K562 (cell line): ENCODE measurements at regions of chr3 and their contacts with region 1.

Region 1: GRCh38 chr3:38131621-38132369 is 5.1 kb downstream of the ACAA1 start:
- DNase-seq: peak; percentile 69 to 82 (median 70)
- ATAC-seq: peak; percentile 87
- H3K4me3 ChIP-seq: no peak overlapping the region
- H3K27ac ChIP-seq: no peak overlapping the region
- H3K4me1 ChIP-seq: peaks cover 4 to 6% of the 10 kb centered on the region in 2 experiments; a peak in 2 of 5 replicates
- H3K27me3 ChIP-seq: no peaks in the 10 kb centered on the region
- CTCF ChIP-seq: peak; percentile 88 to 96 (median 92)
- EP300 ChIP-seq: 0 out of 2 replicates have a peak, but pooled peaks have one; percentile 8
- POLR2A ChIP-seq: no peak
- RAD21 ChIP-seq: peak; percentile 73 to 86

Region 2: DNA sequence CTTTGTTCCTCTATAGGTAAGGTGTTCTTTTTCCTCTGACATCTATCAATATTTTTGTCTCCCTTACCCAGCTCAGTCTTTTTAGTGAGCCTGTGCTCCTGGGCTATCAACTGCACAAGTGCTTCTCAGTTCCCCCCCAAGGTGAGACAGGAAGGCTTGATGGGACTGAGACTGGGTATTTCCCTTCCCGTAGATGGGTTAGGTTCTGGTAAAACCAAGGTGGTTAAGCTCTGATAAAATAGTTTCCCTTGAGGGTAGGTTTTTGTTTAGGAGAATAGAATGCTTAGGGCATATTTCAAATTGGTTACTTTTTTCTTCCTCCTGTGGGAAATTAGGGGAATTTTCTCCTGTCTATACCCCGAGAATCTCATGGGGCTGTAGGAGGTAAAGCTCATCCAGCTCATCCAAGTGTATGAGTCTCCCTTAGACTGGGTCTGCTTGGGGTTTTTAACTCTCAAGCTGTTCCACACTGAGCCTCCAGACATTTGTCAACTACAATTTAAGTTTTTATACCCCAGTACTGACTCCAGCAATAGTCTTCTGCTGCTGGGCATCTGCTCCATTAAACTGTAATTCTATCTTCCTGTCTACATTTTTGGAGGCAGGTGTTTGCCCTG is 78.5 kb after region 1 on chr3:
- CTCF ChIA-PET with region 1: no interaction called
- POLR2A ChIA-PET with region 1: no interaction called
- in situ Hi-C with region 1: no loop called
- intact Hi-C with region 1: no loop called
- DNase-seq: no peak
- ATAC-seq: no peak
- H3K4me3 ChIP-seq: no peak overlapping the region
- H3K27ac ChIP-seq: no peak overlapping the region
- H3K4me1 ChIP-seq: no peaks in the 10 kb centered on the region
- H3K27me3 ChIP-seq: no peaks in the 10 kb centered on the region
- CTCF ChIP-seq: no peak
- EP300 ChIP-seq: no peak
- POLR2A ChIP-seq: no peak
- RAD21 ChIP-seq: no peak

Region 3: GRCh38 chr3:38281895-38282675 is 150.3 kb after region 1 on chr3 and contains the start of gene SLC22A14:
- CTCF ChIA-PET with region 1: no interaction called
- POLR2A ChIA-PET with region 1: no interaction called
- in situ Hi-C with region 1: no loop called
- intact Hi-C with region 1: loop called (anchors 1 kb)
- DNase-seq: peak; percentile 43 to 65 (median 52)
- ATAC-seq: peak; percentile 86
- H3K4me3 ChIP-seq: no peak within 1 kb of the TSS
- H3K27ac ChIP-seq: no peak within 1 kb of the TSS
- H3K4me1 ChIP-seq: peaks cover 0 to 4% of the 10 kb centered on the region in 2 experiments; a peak in 2 of 5 replicates
- H3K27me3 ChIP-seq: peaks cover 4 to 5% of the 10 kb centered on the region in 2 experiments; a peak in 2 of 5 replicates
- CTCF ChIP-seq: peak; percentile 72 to 77 (median 72)
- EP300 ChIP-seq: no peak
- POLR2A ChIP-seq: no peak
- RAD21 ChIP-seq: peak in 1 of 2 experiments; percentile 70; a peak in 3 of 4 replicates
- polyA plus RNA-seq, gene SLC22A14: 0.03 TPM in 1 of 2 experiments, not detected in the other

Region 4: GRCh38 chr3:38519651-38520050 is 387.9 kb after region 1 on chr3:
- CTCF ChIA-PET with region 1: no interaction called
- POLR2A ChIA-PET with region 1: no interaction called
- in situ Hi-C with region 1: no loop called
- intact Hi-C with region 1: no loop called
- DNase-seq: peak in 2 of 4 experiments; percentile 38 to 51
- ATAC-seq: peak; percentile 55
- H3K4me3 ChIP-seq: no peak overlapping the region
- H3K27ac ChIP-seq: no peak overlapping the region
- H3K4me1 ChIP-seq: no peaks in the 10 kb centered on the region
- H3K27me3 ChIP-seq: no peaks in the 10 kb centered on the region
- CTCF ChIP-seq: no peak
- EP300 ChIP-seq: no peak
- POLR2A ChIP-seq: no peak
- RAD21 ChIP-seq: no peak

Region 5: DNA sequence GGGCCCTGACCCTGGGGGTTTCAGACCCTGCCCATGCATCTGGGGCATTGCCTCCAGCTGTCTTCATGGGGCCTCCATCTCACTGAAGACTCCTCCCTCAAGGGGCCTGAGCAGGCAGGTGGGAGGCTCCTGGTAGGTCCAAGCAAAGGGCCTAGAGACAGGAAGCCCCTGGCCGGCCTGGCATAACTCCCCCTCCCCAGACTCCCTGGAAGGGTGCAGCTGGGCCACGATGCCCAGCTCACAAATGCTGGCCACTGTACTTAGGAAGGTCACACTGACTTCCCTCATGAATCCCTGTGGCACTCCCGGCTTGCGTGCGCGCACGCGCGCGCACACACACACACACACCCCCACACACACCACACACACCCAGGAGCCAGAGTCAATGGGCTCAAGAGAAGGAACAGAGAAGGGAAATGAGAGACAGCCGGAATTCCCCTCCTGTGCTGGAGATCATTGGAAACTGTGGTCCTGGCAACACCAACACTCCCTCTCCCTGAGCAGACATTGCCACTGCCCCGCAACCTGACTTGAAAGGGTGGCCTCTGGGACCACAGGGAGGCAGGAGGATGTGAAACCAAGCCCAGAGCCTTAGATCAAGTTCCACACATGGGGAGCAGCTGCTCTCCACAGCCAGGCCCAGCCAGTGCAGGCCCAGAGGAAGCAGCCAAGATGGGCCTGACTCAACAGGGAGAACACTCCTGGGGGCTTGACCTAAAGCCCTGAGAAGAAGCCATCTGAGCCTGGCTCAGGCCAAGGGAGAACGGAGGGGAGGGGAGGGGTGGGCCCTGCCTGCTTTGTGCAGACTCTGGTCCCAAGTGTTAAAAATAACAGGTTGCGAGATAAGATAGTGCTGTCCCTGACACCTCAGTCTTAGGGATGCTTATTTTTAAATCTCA is 448.0 kb after region 1 on chr3:
- CTCF ChIA-PET with region 1: no interaction called
- POLR2A ChIA-PET with region 1: no interaction called
- in situ Hi-C with region 1: no loop called
- intact Hi-C with region 1: no loop called
- DNase-seq: peak in 1 of 4 experiments; percentile 19
- ATAC-seq: no peak
- H3K4me3 ChIP-seq: no peak overlapping the region
- H3K27ac ChIP-seq: no peak overlapping the region
- H3K4me1 ChIP-seq: peaks cover 0 to 7% of the 10 kb centered on the region in 2 experiments; a peak in 1 of 5 replicates
- H3K27me3 ChIP-seq: peaks cover 13 to 88% of the 10 kb centered on the region in 2 experiments
- CTCF ChIP-seq: no peak
- EP300 ChIP-seq: no peak
- POLR2A ChIP-seq: no peak
- RAD21 ChIP-seq: no peak